ENCODE measurements at regions of chr18 and their contacts with region 1.

Region 1: GRCh38 chr18:49728542-49728941 is 84.8 kb downstream of the ACAA2 start:
- DNase-seq: peak; percentile 17 to 90
- H3K4me3 ChIP-seq: no peak overlapping the region
- H3K27ac ChIP-seq: no peak overlapping the region
- H3K4me1 ChIP-seq: peaks cover 3 to 12% (median 9%) of the 10 kb centered on the region in 4 experiments
- H3K27me3 ChIP-seq: no peaks in the 10 kb centered on the region
- CTCF ChIP-seq: peak; percentile 79 to 87 (median 81)
- EP300 ChIP-seq: 0 out of 3 replicates have a peak, but pooled peaks of 1 of the 2 experiments have one; percentile 13
- POLR2A ChIP-seq: no peak
- RAD21 ChIP-seq: peak; percentile 73 to 87

Region 2: GRCh38 chr18:49447810-49448745 is 280.5 kb before region 1 on chr18:
- CTCF ChIA-PET with region 1: no interaction called
- POLR2A ChIA-PET with region 1: no interaction called
- DNase-seq: no peak
- H3K4me3 ChIP-seq: no peak overlapping the region
- H3K27ac ChIP-seq: no peak overlapping the region
- H3K4me1 ChIP-seq: no peaks in the 10 kb centered on the region
- H3K27me3 ChIP-seq: no peaks in the 10 kb centered on the region
- CTCF ChIP-seq: peak in 2 of 3 experiments; percentile 76 to 85; a peak in 3 of 4 replicates
- EP300 ChIP-seq: no peak
- POLR2A ChIP-seq: no peak
- RAD21 ChIP-seq: peak; percentile 92 to 93

Region 3: DNA sequence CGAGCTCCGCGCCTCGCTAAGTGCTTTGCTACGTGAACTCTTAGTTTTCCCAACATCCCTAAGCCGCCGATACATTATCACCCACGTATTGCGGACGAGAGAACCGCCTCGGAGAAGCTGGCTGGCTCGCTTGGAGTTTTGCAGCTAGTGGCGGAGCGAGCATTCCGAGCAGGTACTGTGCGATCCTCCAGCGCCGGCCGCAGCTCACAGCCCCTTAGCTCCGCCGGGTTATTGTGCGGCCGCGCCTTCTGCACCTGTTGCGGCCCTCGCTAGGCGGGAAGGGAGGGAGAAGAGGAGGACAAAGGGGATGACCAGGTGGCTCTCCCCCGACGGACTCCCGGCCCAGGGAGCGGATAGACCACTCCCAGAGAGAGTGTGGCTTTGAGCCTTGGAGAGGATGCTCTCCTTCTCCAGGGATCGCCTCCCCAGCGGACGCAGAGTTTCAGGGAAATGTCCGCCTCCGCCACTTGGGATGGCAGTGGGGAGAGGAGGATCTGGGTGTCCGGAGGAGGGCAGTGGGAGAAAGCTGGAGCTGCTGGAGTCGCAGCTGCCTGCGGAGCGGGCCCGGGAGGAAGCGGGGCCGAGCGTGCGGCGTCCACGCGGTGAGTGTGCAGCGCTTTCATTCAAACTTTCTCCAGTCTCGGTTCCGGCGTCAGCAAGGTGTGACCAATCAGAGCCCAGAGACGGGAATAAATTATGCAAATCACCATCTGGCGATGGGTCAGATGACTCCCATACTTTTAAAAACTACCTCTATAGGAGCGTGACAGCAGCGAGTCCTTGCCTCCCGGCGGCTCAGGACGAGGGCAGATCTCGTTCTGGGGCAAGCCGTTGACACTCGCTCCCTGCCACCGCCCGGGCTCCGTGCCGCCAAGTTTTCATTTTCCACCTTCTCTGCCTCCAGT is 167.0 kb before region 1 on chr18 and contains the start of gene LIPG:
- CTCF ChIA-PET with region 1: interaction called, 13 read pairs
- POLR2A ChIA-PET with region 1: no interaction called
- DNase-seq: peak; percentile 53 to 81
- H3K4me3 ChIP-seq: peak within 1 kb of the TSS; percentile 57 to 74 (median 62)
- H3K27ac ChIP-seq: peak within 1 kb of the TSS; percentile 57; the same call in 1 of the 2 replicates
- H3K4me1 ChIP-seq: peaks cover 4 to 6% (median 4%) of the 10 kb centered on the region in 4 experiments
- H3K27me3 ChIP-seq: peaks cover 0 to 27% (median 17%) of the 10 kb centered on the region in 4 experiments; a peak in 6 of 7 replicates
- CTCF ChIP-seq: no peak
- EP300 ChIP-seq: no peak
- POLR2A ChIP-seq: peak; percentile 74 to 89
- RAD21 ChIP-seq: no peak
- total RNA-seq, gene LIPG: 9.8 and 11.8 TPM in 2 replicates

Region 4: GRCh38 chr18:49658823-49659404 is 69.6 kb before region 1 on chr18:
- CTCF ChIA-PET with region 1: no interaction called
- POLR2A ChIA-PET with region 1: no interaction called
- DNase-seq: no peak
- H3K4me3 ChIP-seq: no peak overlapping the region
- H3K27ac ChIP-seq: no peak overlapping the region
- H3K4me1 ChIP-seq: peaks cover 3 to 10% (median 7%) of the 10 kb centered on the region in 4 experiments
- H3K27me3 ChIP-seq: no peaks in the 10 kb centered on the region
- CTCF ChIP-seq: no peak
- EP300 ChIP-seq: no peak
- POLR2A ChIP-seq: no peak
- RAD21 ChIP-seq: no peak

Region 5: GRCh38 chr18:49716035-49716434 is 12.5 kb before region 1 on chr18:
- CTCF ChIA-PET with region 1: interaction called, 17 read pairs
- POLR2A ChIA-PET with region 1: no interaction called
- DNase-seq: no peak
- H3K4me3 ChIP-seq: no peak overlapping the region
- H3K27ac ChIP-seq: no peak overlapping the region
- H3K4me1 ChIP-seq: no peaks in the 10 kb centered on the region
- H3K27me3 ChIP-seq: no peaks in the 10 kb centered on the region
- CTCF ChIP-seq: no peak
- EP300 ChIP-seq: no peak
- POLR2A ChIP-seq: no peak
- RAD21 ChIP-seq: no peak

Region 6: DNA sequence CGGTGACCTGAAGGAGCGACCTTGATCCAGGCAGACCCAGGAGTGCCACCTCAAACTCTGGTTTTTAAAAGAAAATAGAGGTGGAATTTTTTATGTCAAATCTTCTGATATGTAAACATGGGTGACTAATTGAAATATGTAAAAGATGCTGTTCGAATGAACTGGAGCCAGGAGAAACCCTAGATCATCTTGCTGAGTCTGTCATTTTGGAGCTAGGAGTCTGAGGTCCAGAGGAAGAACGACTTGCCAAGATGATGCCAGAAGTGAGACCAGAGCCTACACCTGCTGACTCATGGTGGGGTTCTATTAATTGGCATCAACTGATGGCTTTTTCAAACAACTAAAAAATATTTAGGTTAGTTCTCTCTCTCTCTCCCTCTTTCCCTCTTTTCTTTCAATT is 10.7 kb after region 1 on chr18:
- CTCF ChIA-PET with region 1: interaction called, 15 read pairs
- POLR2A ChIA-PET with region 1: interaction called, 3 read pairs
- DNase-seq: no peak
- H3K4me3 ChIP-seq: no peak overlapping the region
- H3K27ac ChIP-seq: no peak overlapping the region
- H3K4me1 ChIP-seq: no peaks in the 10 kb centered on the region
- H3K27me3 ChIP-seq: no peaks in the 10 kb centered on the region; a peak in 1 of 7 replicates
- CTCF ChIP-seq: no peak
- EP300 ChIP-seq: no peak
- POLR2A ChIP-seq: no peak
- RAD21 ChIP-seq: no peak

Region 7: GRCh38 chr18:49745045-49746014 is 16.8 kb after region 1 on chr18:
- CTCF ChIA-PET with region 1: interaction called, 15 read pairs
- POLR2A ChIA-PET with region 1: interaction called, 3 read pairs
- DNase-seq: no peak
- H3K4me3 ChIP-seq: no peak overlapping the region
- H3K27ac ChIP-seq: no peak overlapping the region
- H3K4me1 ChIP-seq: no peaks in the 10 kb centered on the region
- H3K27me3 ChIP-seq: no peaks in the 10 kb centered on the region
- CTCF ChIP-seq: no peak
- EP300 ChIP-seq: no peak
- POLR2A ChIP-seq: no peak
- RAD21 ChIP-seq: no peak

Region 8: DNA sequence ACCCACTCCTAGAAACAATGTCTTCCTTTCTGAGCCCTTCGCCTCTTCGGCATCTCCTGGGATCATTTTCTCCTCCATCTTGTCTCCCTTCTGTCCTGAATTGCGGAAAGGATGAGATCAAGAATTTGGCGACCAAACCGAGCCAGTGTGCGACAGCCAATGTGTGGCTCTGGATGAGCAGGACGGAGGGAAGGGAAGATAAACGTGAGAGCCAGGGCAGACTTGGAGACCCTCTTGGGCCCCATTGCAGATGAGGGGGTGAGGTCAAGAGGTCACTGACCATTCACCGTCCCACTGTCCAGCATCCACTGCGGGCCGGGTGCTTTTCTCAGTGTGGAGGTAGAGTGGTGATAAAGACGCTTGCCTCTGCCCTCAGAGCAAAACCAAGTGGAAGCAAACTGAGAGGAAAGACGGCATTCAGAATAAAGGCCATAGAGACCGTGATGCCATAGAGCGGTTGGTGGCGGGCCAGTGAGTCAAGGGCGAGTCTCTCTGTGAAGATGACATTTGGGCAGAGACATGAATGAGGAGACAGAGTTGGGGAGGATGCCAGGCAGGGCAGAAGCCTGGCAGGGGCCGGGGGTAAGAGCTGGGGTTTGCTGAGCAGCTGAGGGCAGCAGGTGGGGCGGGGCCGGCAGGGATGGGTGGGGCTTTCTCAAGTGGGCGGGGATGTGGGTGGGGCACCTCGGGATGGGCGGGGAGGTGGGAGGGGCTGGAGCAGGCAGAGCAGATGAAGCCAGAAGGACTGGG is 29.1 kb after region 1 on chr18:
- CTCF ChIA-PET with region 1: interaction called, 19 read pairs
- POLR2A ChIA-PET with region 1: no interaction called
- DNase-seq: peak in 1 of 2 experiments; percentile 63
- H3K4me3 ChIP-seq: no peak overlapping the region
- H3K27ac ChIP-seq: no peak overlapping the region
- H3K4me1 ChIP-seq: peaks cover 0 to 14% (median 2%) of the 10 kb centered on the region in 4 experiments; a peak in 4 of 7 replicates
- H3K27me3 ChIP-seq: no peaks in the 10 kb centered on the region
- CTCF ChIP-seq: no peak
- EP300 ChIP-seq: no peak
- POLR2A ChIP-seq: no peak
- RAD21 ChIP-seq: no peak

Region 9: DNA sequence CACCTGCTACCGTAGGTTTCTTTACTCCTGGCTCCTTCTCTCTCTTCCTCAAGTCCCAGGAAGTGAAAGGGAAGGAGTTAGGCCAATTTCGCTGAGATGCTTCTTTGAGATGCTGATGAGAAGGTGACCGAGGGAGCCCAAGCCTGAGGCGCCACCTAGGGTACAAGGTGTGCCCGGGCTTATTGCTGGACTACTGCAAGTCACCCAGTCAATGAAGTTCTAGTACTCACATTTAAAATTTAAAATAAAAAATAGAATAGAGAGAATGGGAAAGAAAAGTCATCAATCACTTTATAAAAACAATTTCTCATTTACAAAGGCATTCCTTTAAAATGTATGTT is 39.5 kb after region 1 on chr18:
- CTCF ChIA-PET with region 1: interaction called, 24 read pairs
- POLR2A ChIA-PET with region 1: interaction called, 3 read pairs
- DNase-seq: peak; percentile 69 to 74
- H3K4me3 ChIP-seq: no peak overlapping the region
- H3K27ac ChIP-seq: no peak overlapping the region
- H3K4me1 ChIP-seq: peaks cover 0 to 6% (median 3%) of the 10 kb centered on the region in 4 experiments; a peak in 4 of 7 replicates
- H3K27me3 ChIP-seq: no peaks in the 10 kb centered on the region
- CTCF ChIP-seq: peak; percentile 85 to 88 (median 88)
- EP300 ChIP-seq: no peak
- POLR2A ChIP-seq: no peak
- RAD21 ChIP-seq: peak; percentile 97

Measured in H1 (cell line).